MCF 10A (cell line): ENCODE measurements at regions of chr7 and their contacts with region 1.

Region 1: GRCh38 chr7:30164567-30164966 is 29.8 kb downstream of the MTURN start:
- DNase-seq: peak; percentile 82
- H3K4me3 Mint-ChIP-seq: no peak overlapping the region
- H3K27ac Mint-ChIP-seq: peak overlapping the region; percentile 92
- H3K4me1 Mint-ChIP-seq: peaks cover 42% of the 10 kb centered on the region
- H3K27me3 Mint-ChIP-seq: no peaks in the 10 kb centered on the region
- CTCF ChIP-seq: peak; percentile 63

Region 2: DNA sequence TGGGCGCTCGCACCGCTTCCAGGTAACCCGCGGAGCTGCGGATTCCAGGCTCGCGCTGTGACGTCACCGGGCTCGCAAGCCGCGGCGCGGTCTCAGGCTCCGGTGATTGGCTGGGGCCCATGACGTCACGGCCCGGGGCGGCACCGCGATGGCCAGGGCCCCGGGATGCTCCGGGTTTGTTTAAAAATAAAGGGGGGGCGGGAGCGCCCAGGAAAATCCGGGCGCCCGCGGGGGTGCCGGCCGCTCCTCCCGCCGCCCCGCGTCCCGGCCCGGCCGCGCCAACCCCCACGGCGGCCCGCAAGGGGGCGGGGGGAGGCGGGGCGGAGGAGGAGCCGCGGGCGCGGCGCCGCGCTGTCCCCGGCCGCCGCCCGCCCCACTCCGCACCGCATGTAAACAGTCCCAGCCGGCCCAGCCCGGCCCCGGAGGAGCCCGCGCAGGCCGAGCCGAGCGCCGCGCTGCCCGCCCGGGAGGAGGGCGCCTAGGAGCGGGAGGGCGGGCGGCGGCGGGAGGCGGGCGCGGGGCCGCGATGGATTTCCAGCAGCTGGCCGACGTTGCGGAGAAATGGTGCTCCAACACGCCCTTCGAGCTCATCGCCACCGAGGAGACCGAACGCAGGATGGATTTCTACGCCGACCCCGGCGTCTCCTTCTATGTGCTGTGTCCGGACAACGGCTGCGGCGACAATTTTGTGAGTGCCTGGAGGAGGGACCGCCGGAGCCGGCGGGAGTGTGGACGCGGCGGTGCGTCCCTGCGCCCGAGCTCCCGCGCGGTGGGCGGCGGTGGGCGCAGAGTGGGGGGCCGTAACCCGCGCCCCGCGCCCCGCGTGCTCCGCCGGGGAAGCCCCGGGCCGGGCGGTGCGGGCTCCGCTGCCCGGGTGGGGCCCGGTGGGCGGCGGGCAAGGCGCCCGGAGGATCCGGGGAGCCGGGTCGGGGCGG is 29.7 kb before region 1 on chr7 and contains the start of gene MTURN:
- CTCF ChIA-PET with region 1: interaction called, 3 read pairs
- POLR2A ChIA-PET with region 1: interaction called, 23 read pairs
- intact Hi-C with region 1: loop called (anchors 2 kb)
- DNase-seq: peak; percentile 75
- H3K4me3 Mint-ChIP-seq: peak within 1 kb of the TSS; percentile 92
- H3K27ac Mint-ChIP-seq: peak within 1 kb of the TSS; percentile 27
- H3K4me1 Mint-ChIP-seq: no peaks in the 10 kb centered on the region
- H3K27me3 Mint-ChIP-seq: no peaks in the 10 kb centered on the region
- CTCF ChIP-seq: no peak
- total RNA-seq, gene MTURN: 7.5 and 10.5 TPM in 2 replicates

Region 3: GRCh38 chr7:30142710-30143109 is 21.9 kb before region 1 on chr7:
- CTCF ChIA-PET with region 1: interaction called, 3 read pairs
- POLR2A ChIA-PET with region 1: interaction called, 14 read pairs
- intact Hi-C with region 1: no loop called
- DNase-seq: peak; percentile 68
- H3K4me3 Mint-ChIP-seq: peak overlapping the region; percentile 61
- H3K27ac Mint-ChIP-seq: peak overlapping the region; percentile 77
- H3K4me1 Mint-ChIP-seq: peaks cover 28% of the 10 kb centered on the region
- H3K27me3 Mint-ChIP-seq: no peaks in the 10 kb centered on the region
- CTCF ChIP-seq: no peak

Region 4: DNA sequence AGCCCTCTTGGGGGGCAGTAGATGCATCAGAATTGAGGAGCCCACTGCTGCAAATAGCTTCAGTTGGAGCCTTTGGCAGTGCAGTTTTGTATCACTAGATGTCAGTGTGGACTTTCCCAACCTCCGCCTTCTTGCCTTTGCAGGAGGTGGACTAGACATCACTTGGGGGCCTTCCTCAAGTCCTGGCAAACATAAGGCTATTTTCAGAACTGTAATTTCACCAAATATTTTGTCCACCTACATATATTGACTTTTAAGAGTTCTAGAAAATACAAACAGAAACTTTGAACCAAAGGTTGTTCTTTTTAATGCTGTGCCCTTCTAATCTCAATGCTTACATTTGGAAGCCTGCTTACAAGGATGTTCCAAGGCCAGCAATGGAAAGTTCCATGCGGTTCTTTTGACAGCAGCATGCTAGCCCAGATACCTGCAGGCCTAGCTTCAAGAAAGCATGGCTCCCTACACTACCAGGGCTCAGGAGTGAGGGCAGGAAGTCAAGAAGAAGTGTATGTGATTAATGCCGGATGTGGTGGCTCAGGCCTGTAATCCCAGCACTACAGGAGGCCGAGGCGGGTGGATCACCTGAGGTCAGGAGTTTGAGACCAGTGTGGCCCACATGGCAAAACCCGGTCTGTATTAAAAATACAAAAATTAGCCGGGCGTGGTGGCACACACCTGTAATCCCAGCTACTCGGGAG is 111.8 kb after region 1 on chr7:
- CTCF ChIA-PET with region 1: interaction called, 13 read pairs
- POLR2A ChIA-PET with region 1: interaction called, 4 read pairs
- intact Hi-C with region 1: loop called (anchors 2 kb)
- DNase-seq: peak; percentile 63
- H3K4me3 Mint-ChIP-seq: no peak overlapping the region
- H3K27ac Mint-ChIP-seq: no peak overlapping the region
- H3K4me1 Mint-ChIP-seq: peaks cover 6% of the 10 kb centered on the region
- H3K27me3 Mint-ChIP-seq: no peaks in the 10 kb centered on the region
- CTCF ChIP-seq: peak; percentile 76

Region 5: GRCh38 chr7:30412810-30413504 is 248.4 kb after region 1 on chr7:
- CTCF ChIA-PET with region 1: interaction called, 5 read pairs
- POLR2A ChIA-PET with region 1: interaction called, 7 read pairs
- intact Hi-C with region 1: loop called (anchors 1 kb)
- DNase-seq: peak; percentile 90
- H3K4me3 Mint-ChIP-seq: no peak overlapping the region
- H3K27ac Mint-ChIP-seq: no peak overlapping the region
- H3K4me1 Mint-ChIP-seq: peaks cover 10% of the 10 kb centered on the region
- H3K27me3 Mint-ChIP-seq: no peaks in the 10 kb centered on the region
- CTCF ChIP-seq: peak; percentile 54

Region 6: GRCh38 chr7:30504347-30505173 is 340.0 kb after region 1 on chr7 and contains the start of gene GGCT:
- CTCF ChIA-PET with region 1: no interaction called
- POLR2A ChIA-PET with region 1: interaction called, 3 read pairs
- intact Hi-C with region 1: loop called (anchors 2 kb)
- DNase-seq: peak; percentile 99
- H3K4me3 Mint-ChIP-seq: peak within 1 kb of the TSS; percentile 83
- H3K27ac Mint-ChIP-seq: peak within 1 kb of the TSS; percentile 77
- H3K4me1 Mint-ChIP-seq: peaks cover 30% of the 10 kb centered on the region
- H3K27me3 Mint-ChIP-seq: no peaks in the 10 kb centered on the region
- CTCF ChIP-seq: no peak
- total RNA-seq, gene GGCT: 48.3 and 64.8 TPM in 2 replicates